ENCODE measurements at regions of chr2 and their contacts with region 1.

Region 1: GRCh38 chr2:173210270-173211196 is 134.9 kb downstream of the MAP3K20 start:
- DNase-seq: peak; percentile 80
- H3K4me3 ChIP-seq: no peak overlapping the region
- H3K27ac ChIP-seq: peak overlapping the region; percentile 59 to 69
- H3K4me1 ChIP-seq: peaks cover 0 to 37% (median 24%) of the 10 kb centered on the region in 4 donors
- H3K27me3 ChIP-seq: no peaks in the 10 kb centered on the region
- CTCF ChIP-seq: peak; percentile 85 to 95

Region 2: DNA sequence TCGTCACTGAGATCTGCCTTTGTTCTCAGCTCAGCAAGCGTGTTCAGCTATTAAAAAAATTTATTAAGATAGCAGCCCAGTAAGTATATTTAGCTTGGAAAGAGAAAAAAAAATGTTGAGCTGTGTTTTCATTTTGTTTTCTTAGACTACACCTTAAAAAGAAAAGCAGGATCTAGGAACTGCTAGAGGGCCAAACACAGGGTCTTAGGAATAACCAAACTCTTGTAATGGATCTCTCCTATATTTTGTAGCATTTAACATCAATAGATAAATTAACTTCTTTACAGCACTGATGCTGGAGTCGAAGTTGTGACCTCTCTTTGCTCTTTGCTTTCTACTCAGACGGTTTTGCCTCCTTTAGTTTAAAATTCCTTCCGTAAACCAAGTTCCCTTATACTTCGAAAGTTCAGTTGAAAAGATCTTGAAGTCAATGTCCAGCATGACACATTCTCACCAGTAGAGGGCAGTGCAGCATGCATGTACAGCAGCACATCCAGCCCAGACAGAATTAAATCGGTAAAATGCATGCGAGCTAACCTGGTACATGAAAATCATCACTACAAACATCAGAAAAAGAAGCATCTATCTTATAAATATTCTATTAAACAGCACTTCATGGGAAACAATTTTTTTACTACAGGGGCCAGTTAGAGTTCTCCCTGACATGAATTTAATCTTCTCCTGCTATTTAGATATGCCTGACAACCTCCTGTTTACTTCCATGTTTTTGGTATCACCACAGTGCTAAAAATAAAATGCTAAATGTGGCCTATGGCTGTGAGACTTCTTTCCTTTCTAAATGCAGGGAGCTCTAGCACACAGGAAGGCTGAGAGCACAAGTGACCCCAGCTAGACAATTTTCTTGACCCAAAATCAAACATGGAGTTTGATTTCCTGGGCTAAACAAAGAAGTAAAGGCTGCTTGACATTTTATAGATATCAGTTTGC is 183.1 kb before region 1 on chr2:
- intact Hi-C with region 1: loop called (anchors 5 kb)
- DNase-seq: peak; percentile 88 to 95
- H3K4me3 ChIP-seq: no peak overlapping the region
- H3K27ac ChIP-seq: peak overlapping the region; percentile 70 to 74
- H3K4me1 ChIP-seq: peaks cover 0 to 22% (median 9%) of the 10 kb centered on the region in 4 donors
- H3K27me3 ChIP-seq: no peaks in the 10 kb centered on the region
- CTCF ChIP-seq: peak; percentile 93 to 96